Mammary epithelial cell (primary cell): ENCODE measurements at regions of chr13 and their contacts with region 1.

Region 1: GRCh38 chr13:112187527-112188296 is 120.8 kb downstream of the SOX1 start:
- DNase-seq: no peak
- H3K4me3 ChIP-seq: no peak overlapping the region
- H3K27ac ChIP-seq: no peak overlapping the region
- H3K4me1 ChIP-seq: no peaks in the 10 kb centered on the region
- H3K27me3 ChIP-seq: no peaks in the 10 kb centered on the region
- CTCF ChIP-seq: no peak

Region 2: GRCh38 chr13:112079696-112080095 is 108.0 kb before region 1 on chr13:
- CTCF ChIA-PET with region 1: no interaction called
- dilution Hi-C with region 1: no loop called
- in situ Hi-C with region 1: no loop called
- intact Hi-C with region 1: no loop called
- DNase-seq: no peak
- H3K4me3 ChIP-seq: no peak overlapping the region
- H3K27ac ChIP-seq: no peak overlapping the region
- H3K4me1 ChIP-seq: no peaks in the 10 kb centered on the region
- H3K27me3 ChIP-seq: peaks cover 6% of the 10 kb centered on the region
- CTCF ChIP-seq: no peak

Region 3: DNA sequence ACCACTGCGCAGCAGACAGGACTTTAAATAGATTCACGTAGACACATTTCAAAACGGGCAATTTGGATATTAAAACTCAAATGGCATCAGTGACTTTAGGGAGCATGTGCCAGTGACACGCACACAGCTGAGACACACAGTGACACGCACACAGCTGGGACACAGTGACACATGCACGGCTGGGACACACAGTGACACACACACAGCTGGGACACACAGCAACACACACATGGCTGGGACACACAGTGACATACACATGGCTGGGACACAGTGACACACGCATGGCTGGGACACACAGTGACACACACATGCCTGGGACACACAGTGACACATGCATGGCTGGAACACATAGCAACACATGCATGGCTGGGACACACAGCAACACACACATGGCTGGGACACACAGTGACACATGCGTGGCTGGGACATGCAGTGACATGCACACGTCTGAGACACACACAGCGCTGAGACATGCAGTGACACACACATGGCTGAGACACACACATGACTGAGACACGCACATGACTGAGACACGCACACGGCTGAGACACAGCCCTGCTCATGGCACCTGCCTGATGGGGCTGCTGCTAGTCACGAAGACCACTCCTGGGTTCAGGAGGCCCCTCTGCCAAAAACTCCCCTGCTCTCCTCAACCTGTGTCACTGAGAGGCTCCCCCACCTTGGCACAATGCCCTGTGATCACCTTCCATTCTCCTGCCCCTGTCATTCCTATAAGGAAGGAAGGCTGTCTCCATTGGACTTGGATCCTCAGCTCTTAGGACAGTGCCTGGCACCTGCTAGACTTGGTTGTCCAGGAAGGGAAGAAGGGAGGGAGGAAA is 68.3 kb before region 1 on chr13:
- CTCF ChIA-PET with region 1: no interaction called
- dilution Hi-C with region 1: loop called (anchors 5 kb)
- in situ Hi-C with region 1: no loop called
- intact Hi-C with region 1: no loop called
- DNase-seq: no peak
- H3K4me3 ChIP-seq: no peak overlapping the region
- H3K27ac ChIP-seq: no peak overlapping the region
- H3K4me1 ChIP-seq: no peaks in the 10 kb centered on the region
- H3K27me3 ChIP-seq: no peaks in the 10 kb centered on the region
- CTCF ChIP-seq: no peak

Region 4: GRCh38 chr13:112241288-112241687 is 53.6 kb after region 1 on chr13:
- CTCF ChIA-PET with region 1: no interaction called
- dilution Hi-C with region 1: loop called (anchors 5 kb)
- in situ Hi-C with region 1: no loop called
- intact Hi-C with region 1: no loop called
- DNase-seq: no peak
- H3K4me3 ChIP-seq: no peak overlapping the region
- H3K27ac ChIP-seq: no peak overlapping the region
- H3K4me1 ChIP-seq: no peaks in the 10 kb centered on the region
- H3K27me3 ChIP-seq: no peaks in the 10 kb centered on the region
- CTCF ChIP-seq: no peak

Region 5: GRCh38 chr13:112260108-112261055 is 72.7 kb after region 1 on chr13:
- CTCF ChIA-PET with region 1: no interaction called
- dilution Hi-C with region 1: no loop called
- in situ Hi-C with region 1: no loop called
- intact Hi-C with region 1: no loop called
- DNase-seq: no peak
- H3K4me3 ChIP-seq: no peak overlapping the region
- H3K27ac ChIP-seq: no peak overlapping the region
- H3K4me1 ChIP-seq: no peaks in the 10 kb centered on the region
- H3K27me3 ChIP-seq: no peaks in the 10 kb centered on the region
- CTCF ChIP-seq: no peak